CD4-positive, alpha-beta T cell (primary cell): ENCODE measurements at regions of chr10 and their contacts with region 1.

Region 1: DNA sequence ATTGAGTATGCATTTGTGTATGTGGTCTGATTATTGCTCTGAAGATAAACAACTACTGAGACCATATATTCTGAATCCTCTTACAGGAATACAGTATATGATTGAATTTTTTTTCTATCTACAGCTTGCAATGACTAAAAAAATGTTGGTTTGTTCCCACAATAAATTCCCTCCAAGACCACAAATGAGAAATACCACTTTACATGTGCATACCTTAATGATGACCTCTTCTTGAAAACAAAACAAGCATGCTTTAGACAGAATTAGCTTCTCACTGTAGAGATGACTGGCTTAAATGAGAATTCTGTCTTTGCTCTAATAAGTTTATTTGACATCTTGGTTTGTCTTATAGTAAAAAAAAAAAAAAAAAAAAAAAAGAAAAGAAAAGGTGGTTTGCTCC is 241.5 kb downstream of the PCDH15 start:
- DNase-seq: no peak
- ATAC-seq: no peak
- H3K4me3 ChIP-seq: no peak overlapping the region
- H3K4me3 Mint-ChIP-seq: no peak overlapping the region
- H3K27ac ChIP-seq: no peak overlapping the region
- H3K27ac Mint-ChIP-seq: no peak overlapping the region
- H3K4me1 ChIP-seq: no peaks in the 10 kb centered on the region
- H3K4me1 Mint-ChIP-seq: no peaks in the 10 kb centered on the region
- H3K27me3 ChIP-seq: no peaks in the 10 kb centered on the region
- H3K27me3 Mint-ChIP-seq: no peaks in the 10 kb centered on the region
- CTCF ChIP-seq: no peak

Region 2: DNA sequence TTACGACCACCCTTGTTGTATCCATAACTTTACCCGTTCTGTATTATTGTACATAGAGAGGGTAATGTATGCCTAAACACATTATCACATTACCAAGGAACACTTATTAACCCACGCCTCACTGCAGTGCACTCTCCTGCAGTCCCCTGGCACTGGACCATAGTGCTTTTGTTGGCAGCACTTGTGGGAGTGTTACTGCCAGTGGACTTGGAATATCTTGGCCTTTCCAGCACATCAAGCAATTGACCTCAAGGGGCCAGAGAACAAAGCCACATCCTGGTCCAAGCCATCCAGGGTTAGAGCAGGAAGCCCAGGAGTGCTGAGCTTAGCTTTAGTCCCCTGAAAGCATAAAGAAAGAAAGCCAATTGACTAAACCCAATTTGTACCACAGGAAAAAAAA is 62.6 kb before region 1 on chr10:
- CTCF ChIA-PET with region 1: no interaction called
- POLR2A ChIA-PET with region 1: no interaction called
- intact Hi-C with region 1: loop called in 1 of 2 experiments (anchors 10 kb)
- DNase-seq: no peak
- ATAC-seq: no peak
- H3K4me3 ChIP-seq: no peak overlapping the region
- H3K4me3 Mint-ChIP-seq: no peak overlapping the region
- H3K27ac ChIP-seq: no peak overlapping the region
- H3K27ac Mint-ChIP-seq: no peak overlapping the region
- H3K4me1 ChIP-seq: no peaks in the 10 kb centered on the region
- H3K4me1 Mint-ChIP-seq: no peaks in the 10 kb centered on the region
- H3K27me3 ChIP-seq: no peaks in the 10 kb centered on the region
- H3K27me3 Mint-ChIP-seq: no peaks in the 10 kb centered on the region
- CTCF ChIP-seq: no peak

Region 3: GRCh38 chr10:54614072-54614471 is 54.6 kb after region 1 on chr10:
- CTCF ChIA-PET with region 1: no interaction called
- POLR2A ChIA-PET with region 1: no interaction called
- intact Hi-C with region 1: no loop called
- DNase-seq: no peak
- ATAC-seq: no peak
- H3K4me3 ChIP-seq: no peak overlapping the region
- H3K4me3 Mint-ChIP-seq: no peak overlapping the region
- H3K27ac ChIP-seq: no peak overlapping the region
- H3K27ac Mint-ChIP-seq: no peak overlapping the region
- H3K4me1 ChIP-seq: no peaks in the 10 kb centered on the region
- H3K4me1 Mint-ChIP-seq: no peaks in the 10 kb centered on the region
- H3K27me3 ChIP-seq: no peaks in the 10 kb centered on the region
- H3K27me3 Mint-ChIP-seq: no peaks in the 10 kb centered on the region
- CTCF ChIP-seq: no peak

Region 4: DNA sequence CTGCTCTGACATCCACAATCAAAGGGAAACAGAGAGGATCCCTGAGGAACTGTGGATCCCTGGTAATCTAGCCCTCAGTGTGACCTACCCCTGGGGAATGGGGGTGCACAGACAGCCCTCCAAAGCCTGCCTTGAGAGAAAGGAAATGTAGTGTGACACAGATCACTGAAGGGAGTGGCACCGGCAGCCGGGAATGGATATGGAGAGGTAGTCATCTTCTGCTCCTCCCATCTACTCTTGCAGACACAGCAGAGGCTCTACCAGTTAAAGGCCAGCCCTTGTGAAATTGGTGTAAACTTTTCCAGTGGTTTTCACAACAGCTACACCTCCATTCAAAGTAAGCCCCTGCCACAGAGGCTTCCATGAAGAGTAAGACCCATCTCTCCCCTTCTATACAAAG is 97.1 kb after region 1 on chr10:
- CTCF ChIA-PET with region 1: no interaction called
- POLR2A ChIA-PET with region 1: no interaction called
- intact Hi-C with region 1: no loop called
- DNase-seq: no peak
- ATAC-seq: no peak
- H3K4me3 ChIP-seq: no peak overlapping the region
- H3K4me3 Mint-ChIP-seq: no peak overlapping the region
- H3K27ac ChIP-seq: no peak overlapping the region
- H3K27ac Mint-ChIP-seq: no peak overlapping the region
- H3K4me1 ChIP-seq: no peaks in the 10 kb centered on the region
- H3K4me1 Mint-ChIP-seq: no peaks in the 10 kb centered on the region
- H3K27me3 ChIP-seq: no peaks in the 10 kb centered on the region
- H3K27me3 Mint-ChIP-seq: no peaks in the 10 kb centered on the region
- CTCF ChIP-seq: no peak

Region 5: DNA sequence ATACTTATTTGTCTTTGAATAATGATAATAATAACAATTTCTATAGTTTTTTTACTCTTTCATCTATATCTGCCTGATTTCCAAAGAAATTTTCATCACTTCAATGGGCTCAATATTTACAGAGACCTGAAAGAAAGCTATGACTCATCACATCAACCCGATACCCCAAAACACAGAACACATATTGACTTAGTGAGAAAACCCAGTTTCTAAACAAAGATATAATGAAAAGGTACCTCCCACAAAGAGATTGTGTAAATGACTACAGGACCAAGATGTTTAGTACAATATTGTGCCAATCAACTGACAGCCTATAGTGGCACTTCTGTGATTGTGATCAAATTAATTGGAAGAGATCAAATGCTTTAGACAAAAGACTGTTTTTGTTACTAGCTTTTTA is 107.6 kb after region 1 on chr10:
- CTCF ChIA-PET with region 1: no interaction called
- POLR2A ChIA-PET with region 1: no interaction called
- intact Hi-C with region 1: no loop called
- DNase-seq: no peak
- ATAC-seq: no peak
- H3K4me3 ChIP-seq: no peak overlapping the region
- H3K4me3 Mint-ChIP-seq: no peak overlapping the region
- H3K27ac ChIP-seq: no peak overlapping the region
- H3K27ac Mint-ChIP-seq: no peak overlapping the region
- H3K4me1 ChIP-seq: no peaks in the 10 kb centered on the region
- H3K4me1 Mint-ChIP-seq: no peaks in the 10 kb centered on the region
- H3K27me3 ChIP-seq: no peaks in the 10 kb centered on the region
- H3K27me3 Mint-ChIP-seq: no peaks in the 10 kb centered on the region
- CTCF ChIP-seq: no peak